ENCODE measurements at regions of chr3 and their contacts with region 1.

Region 1: GRCh38 chr3:149657926-149658733 is at the start of gene WWTR1:
- DNase-seq: peak; percentile 95 to 96
- ATAC-seq: peak; percentile 91
- H3K4me3 ChIP-seq: peak within 1 kb of the TSS; percentile 88
- H3K27ac ChIP-seq: peak within 1 kb of the TSS; percentile 99
- H3K4me1 ChIP-seq: peaks cover 0 to 5% of the 10 kb centered on the region in 2 donors
- H3K27me3 ChIP-seq: no peaks in the 10 kb centered on the region
- total RNA-seq, gene WWTR1: 148 to 225 TPM

Region 2: GRCh38 chr3:149310796-149311534 is 347.2 kb before region 1 on chr3:
- intact Hi-C with region 1: no loop called
- DNase-seq: no peak
- ATAC-seq: no peak
- H3K4me3 ChIP-seq: no peak overlapping the region
- H3K27ac ChIP-seq: no peak overlapping the region
- H3K4me1 ChIP-seq: peaks cover 5 to 6% of the 10 kb centered on the region in 2 donors
- H3K27me3 ChIP-seq: no peaks in the 10 kb centered on the region

Region 3: GRCh38 chr3:149424918-149425317 is 233.2 kb before region 1 on chr3:
- intact Hi-C with region 1: no loop called
- DNase-seq: no peak
- ATAC-seq: no peak
- H3K4me3 ChIP-seq: no peak overlapping the region
- H3K27ac ChIP-seq: no peak overlapping the region
- H3K4me1 ChIP-seq: no peaks in the 10 kb centered on the region
- H3K27me3 ChIP-seq: no peaks in the 10 kb centered on the region

Region 4: GRCh38 chr3:149512209-149512782 is 145.8 kb before region 1 on chr3:
- intact Hi-C with region 1: loop called (anchors 5 kb)
- DNase-seq: peak in 1 of 2 donors; percentile 67
- ATAC-seq: peak; percentile 85
- H3K4me3 ChIP-seq: no peak overlapping the region
- H3K27ac ChIP-seq: no peak overlapping the region
- H3K4me1 ChIP-seq: peaks cover 0 to 6% of the 10 kb centered on the region in 2 donors
- H3K27me3 ChIP-seq: no peaks in the 10 kb centered on the region

Region 5: GRCh38 chr3:149534671-149535332 is 123.3 kb before region 1 on chr3:
- intact Hi-C with region 1: loop called (anchors 5 kb)
- DNase-seq: no peak
- ATAC-seq: no peak
- H3K4me3 ChIP-seq: no peak overlapping the region
- H3K27ac ChIP-seq: peak overlapping the region in 1 of 2 donors; percentile 32
- H3K4me1 ChIP-seq: peaks cover 12 to 23% of the 10 kb centered on the region in 2 donors
- H3K27me3 ChIP-seq: no peaks in the 10 kb centered on the region

Region 6: GRCh38 chr3:149572796-149573414 is 85.2 kb before region 1 on chr3:
- intact Hi-C with region 1: loop called (anchors 5 kb)
- DNase-seq: peak in 1 of 2 donors; percentile 68
- ATAC-seq: peak; percentile 73
- H3K4me3 ChIP-seq: no peak overlapping the region
- H3K27ac ChIP-seq: peak overlapping the region in 1 of 2 donors; percentile 28
- H3K4me1 ChIP-seq: peaks cover 9 to 13% of the 10 kb centered on the region in 2 donors
- H3K27me3 ChIP-seq: no peaks in the 10 kb centered on the region

Region 7: DNA sequence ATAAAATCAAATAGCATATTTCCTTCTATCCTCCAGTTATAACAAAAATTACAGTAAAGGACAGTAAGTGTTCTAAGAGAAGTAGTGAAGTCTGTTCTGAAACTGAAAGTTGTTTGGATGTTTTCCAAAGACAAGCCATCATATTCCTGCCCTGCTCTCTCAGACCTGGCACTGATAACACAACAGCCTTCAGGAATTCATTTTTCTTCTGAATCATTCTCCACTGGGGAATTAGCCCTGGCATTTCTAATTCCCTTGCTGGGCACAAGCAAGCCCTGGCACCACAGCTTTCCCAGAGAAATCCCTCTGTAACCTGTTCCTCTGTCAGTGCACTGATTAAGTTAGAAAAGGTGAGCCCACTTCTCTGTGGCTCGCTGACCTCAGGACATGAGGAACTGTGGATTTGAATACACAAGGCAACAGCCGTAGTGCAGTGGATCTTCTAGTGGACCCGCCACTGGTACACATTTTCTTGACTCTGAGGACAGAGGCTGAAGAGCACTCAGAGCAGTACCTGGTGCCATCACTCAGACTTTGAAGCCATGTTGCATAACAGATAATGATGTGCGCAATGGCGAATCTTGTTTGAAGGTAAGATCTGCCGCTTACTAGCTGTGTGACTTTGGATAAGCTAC is 61.9 kb before region 1 on chr3:
- intact Hi-C with region 1: loop called in 1 of 2 experiments (anchors 2 kb)
- DNase-seq: no peak
- ATAC-seq: peak; percentile 19
- H3K4me3 ChIP-seq: no peak overlapping the region
- H3K27ac ChIP-seq: peak overlapping the region; percentile 21 to 96
- H3K4me1 ChIP-seq: peaks cover 8 to 13% of the 10 kb centered on the region in 2 donors
- H3K27me3 ChIP-seq: no peaks in the 10 kb centered on the region

Region 8: DNA sequence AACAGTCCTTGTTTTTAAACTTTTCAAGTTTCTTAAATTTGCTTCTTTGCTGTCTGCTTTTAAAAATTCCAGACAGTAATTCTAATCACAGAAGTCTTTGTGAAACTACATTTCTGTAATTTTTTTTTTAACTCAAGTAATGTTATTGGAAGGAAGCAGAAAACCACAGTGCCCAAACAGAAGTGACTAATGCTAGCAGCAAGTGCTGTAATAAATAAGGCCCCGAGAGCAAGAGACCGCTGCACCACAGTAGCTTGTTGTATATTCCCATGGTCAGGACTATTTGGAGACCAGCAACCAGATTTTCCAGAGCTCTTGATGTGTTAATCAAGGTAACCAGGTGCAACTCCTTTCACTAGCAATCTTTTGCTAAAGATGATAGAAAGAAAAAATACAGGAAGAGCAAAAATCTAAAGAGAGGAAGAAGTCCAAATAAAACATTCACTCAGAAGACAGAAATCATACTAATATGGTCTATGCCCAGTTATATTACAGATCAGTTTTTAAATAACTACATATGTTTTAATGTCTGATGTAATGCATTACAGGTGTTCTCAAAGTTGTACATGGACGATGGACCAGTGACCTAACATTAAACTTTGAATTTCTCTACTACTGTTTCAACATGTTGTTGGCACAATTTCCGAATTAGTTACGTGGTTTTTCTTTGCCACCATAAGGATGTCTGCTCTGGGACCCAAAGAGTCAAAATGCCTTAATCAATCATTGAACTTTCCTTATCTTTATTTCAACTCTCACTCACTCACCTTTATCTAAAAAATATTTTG is 36.7 kb before region 1 on chr3:
- intact Hi-C with region 1: loop called (anchors 5 kb)
- DNase-seq: peak in 1 of 2 donors; percentile 56
- ATAC-seq: peak; percentile 61
- H3K4me3 ChIP-seq: no peak overlapping the region
- H3K27ac ChIP-seq: no peak overlapping the region
- H3K4me1 ChIP-seq: peaks cover 14 to 29% of the 10 kb centered on the region in 2 donors
- H3K27me3 ChIP-seq: no peaks in the 10 kb centered on the region

Region 9: DNA sequence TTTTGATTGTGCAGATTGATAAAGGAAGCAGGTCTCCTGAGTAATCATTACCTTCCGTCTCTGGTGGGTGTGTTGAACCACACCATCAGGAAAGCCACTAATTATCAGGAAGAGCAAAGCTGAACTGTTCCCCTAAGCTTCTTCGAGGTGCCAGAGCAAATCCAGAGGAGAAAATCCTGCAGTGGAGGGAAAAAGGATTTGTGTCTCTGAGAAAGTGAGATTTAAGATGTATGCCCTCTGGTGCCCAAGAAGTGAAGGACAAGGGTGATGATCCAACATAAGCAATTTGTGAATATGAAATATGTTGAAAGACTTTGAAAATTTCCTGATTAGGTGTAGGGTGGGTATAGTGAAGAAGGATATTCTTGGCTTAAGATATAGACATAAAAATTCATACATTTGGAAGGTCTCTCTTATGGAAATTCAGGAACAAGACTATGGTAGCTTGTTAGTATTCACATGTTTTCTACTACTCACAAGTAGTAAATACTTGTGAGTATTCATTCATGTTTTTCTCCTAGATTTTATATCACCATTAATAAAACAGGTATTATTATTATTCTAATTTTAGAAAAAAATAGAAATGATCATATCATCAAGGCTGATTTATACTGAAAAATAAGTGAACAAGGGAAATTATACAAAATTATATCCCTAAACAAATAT is 59.4 kb after region 1 on chr3:
- intact Hi-C with region 1: loop called in 1 of 2 experiments (anchors 5 kb)
- DNase-seq: peak in 1 of 2 donors; percentile 47
- ATAC-seq: peak; percentile 62
- H3K4me3 ChIP-seq: no peak overlapping the region
- H3K27ac ChIP-seq: no peak overlapping the region
- H3K4me1 ChIP-seq: no peaks in the 10 kb centered on the region
- H3K27me3 ChIP-seq: no peaks in the 10 kb centered on the region